Activated CD4-positive, alpha-beta T cell treated with anti-CD3 and anti-CD28 coated beads, Interleukin-2, amount 10 ng/mL, durations not matched to agents 24 days and 14 days (primary cell): ENCODE measurements at regions of chr12 and their contacts with region 1.

Region 1: DNA sequence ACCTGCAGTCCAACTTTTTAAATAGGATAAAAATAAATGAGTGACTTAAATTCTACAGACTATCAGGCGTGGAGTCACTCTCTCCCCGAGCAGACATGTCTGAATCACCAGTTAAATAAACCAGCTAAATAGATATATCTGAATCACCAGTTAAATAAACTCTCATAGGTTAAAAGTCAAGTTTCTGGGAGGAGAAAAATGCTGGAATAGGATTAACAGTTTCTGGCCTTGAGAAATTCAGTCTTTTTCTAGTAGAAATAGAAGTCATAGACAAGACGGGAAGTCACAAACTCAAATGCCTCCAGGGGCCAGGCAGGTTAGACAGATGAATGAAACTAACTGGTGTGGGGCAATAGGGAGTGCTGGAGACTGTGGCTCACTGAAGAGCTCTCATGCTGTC is 258.6 kb upstream of the TMEM132C start:
- DNase-seq: no peak
- H3K4me3 Mint-ChIP-seq: no peak overlapping the region
- H3K27ac Mint-ChIP-seq: no peak overlapping the region
- H3K4me1 Mint-ChIP-seq: no peaks in the 10 kb centered on the region
- H3K27me3 Mint-ChIP-seq: no peaks in the 10 kb centered on the region

Region 2: GRCh38 chr12:127943481-127944210 is 64.7 kb before region 1 on chr12:
- intact Hi-C with region 1: no loop called
- DNase-seq: no peak
- H3K4me3 Mint-ChIP-seq: no peak overlapping the region
- H3K27ac Mint-ChIP-seq: no peak overlapping the region
- H3K4me1 Mint-ChIP-seq: no peaks in the 10 kb centered on the region
- H3K27me3 Mint-ChIP-seq: no peaks in the 10 kb centered on the region

Region 3: DNA sequence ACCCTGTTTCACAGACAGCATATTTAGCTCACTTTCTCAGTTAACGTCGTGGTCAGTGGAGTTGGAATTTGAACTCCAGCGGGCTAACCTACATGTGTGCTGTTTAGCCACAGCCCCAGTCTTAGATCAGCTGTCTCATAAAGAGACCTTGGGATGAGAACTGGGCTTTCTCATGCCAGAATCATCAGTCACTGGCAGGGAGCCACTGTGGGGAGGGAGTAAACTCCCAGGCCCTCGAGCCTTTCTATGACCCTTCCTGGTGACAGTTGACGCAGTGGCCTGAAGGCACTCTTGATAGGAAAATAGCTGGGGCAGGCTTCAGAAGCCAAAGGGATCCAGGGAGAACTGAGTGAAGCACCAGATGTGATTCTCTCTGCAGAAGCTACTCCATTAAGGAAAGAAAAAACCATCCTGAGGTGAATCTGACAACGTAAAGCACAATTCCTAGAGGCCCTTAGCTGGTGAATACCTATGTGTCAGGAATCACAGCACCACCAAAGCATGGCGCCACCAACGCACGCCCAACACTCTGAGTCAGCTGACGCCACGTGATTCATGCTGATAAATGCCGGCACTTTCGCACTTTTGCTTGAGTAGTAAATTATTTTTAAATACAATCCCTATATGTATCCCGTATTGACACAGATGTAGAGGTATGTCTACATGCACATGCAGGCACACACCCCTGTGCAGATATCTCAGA is 21.0 kb before region 1 on chr12:
- intact Hi-C with region 1: loop called (anchors 1 kb)
- DNase-seq: no peak
- H3K4me3 Mint-ChIP-seq: no peak overlapping the region
- H3K27ac Mint-ChIP-seq: no peak overlapping the region
- H3K4me1 Mint-ChIP-seq: no peaks in the 10 kb centered on the region
- H3K27me3 Mint-ChIP-seq: no peaks in the 10 kb centered on the region